Activated T-helper 1 cell treated with anti-CD3 and anti-CD28 coated beads, Interleukin-12 subunit alpha, Interleukin-12 subunit beta, Interleukin-2, Interleukin-4 antibody, amounts not matched to agents 30 ng/mL and 10 ng/mL and 1 ng/mL, durations not matched to agents 14 hours and 24 hours and 36 hours (primary cell): ENCODE measurements at regions of chr20 and their contacts with region 1.

Region 1: DNA sequence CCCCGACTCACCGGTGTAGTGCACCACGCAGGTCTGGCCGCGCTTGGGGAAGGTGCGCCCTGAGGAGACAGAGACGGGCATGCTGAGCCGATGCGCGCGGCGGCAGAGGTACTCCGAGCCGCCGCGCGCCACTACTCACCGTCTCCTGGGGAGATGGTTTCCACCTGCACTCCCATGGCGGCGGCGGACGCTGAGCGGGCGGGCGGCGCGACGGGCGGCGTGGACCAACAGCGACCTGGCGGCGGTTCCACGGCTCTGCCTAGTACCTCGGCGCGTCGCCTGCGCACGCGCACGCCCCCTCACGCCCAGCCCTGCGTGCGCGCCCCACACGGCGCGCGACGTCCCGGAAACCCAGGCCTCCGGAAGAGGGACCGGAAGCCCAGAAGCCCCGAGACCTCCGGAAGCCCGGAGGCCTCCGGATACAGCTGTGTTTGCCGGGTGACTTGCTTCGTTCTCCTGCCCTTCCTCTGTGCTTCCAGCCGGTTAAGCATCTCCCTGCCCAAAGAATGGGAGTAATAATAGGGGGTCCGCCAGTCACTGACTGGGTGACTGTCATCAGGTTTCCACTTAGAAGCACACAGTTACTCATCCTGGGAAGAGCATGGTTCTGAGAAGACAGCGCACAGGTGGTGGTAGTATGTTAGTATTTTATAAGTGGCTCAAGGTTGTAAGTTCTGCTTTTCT is at the start of gene FKBP1A:
- DNase-seq: peak; percentile 89
- H3K4me3 Mint-ChIP-seq: peak within 1 kb of the TSS; percentile 94
- H3K27ac Mint-ChIP-seq: peak within 1 kb of the TSS; percentile 92
- H3K4me1 Mint-ChIP-seq: peaks cover 65% of the 10 kb centered on the region
- H3K27me3 Mint-ChIP-seq: peaks cover 18% of the 10 kb centered on the region
- total RNA-seq, gene FKBP1A: 295 and 297 TPM in 2 replicates

Region 2: DNA sequence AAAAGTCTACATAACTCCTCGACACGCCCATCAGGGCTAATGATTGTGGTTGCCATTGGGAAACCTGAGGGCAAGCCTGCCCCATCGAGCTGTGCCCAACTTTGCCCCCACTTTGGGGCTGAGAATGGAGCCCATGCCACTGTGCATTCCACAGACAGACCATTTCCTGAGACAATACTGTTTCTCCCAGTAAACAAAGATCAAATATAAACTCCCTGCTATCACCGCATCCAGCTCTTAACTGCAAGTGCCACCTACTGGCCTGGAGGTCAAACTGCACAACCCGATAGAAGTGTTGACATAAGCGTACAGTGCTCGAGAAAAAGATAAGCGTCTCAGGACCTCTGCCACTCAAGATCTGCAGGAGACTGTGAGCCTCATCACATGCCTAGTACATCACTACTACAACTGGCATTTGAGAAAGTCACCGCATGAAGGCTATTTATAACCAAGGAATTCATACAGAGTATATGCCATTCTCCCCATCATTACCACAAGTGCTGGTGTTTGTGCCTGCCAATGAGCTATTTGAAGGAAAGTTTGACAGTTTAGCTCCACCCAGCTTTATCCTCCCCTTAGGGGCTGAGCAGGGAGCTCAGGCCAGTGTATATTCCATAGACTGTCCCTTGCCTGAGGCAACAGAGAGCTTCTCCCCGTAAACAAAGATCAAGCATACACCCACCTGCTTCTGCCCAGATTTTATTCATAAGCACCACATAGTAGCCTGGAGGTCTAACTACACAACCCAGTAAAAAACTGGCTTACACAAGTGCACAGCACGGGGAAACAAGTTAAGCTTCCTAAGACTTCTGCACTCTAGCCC is 1255.1 kb before region 1 on chr20:
- intact Hi-C with region 1: no loop called
- DNase-seq: no peak
- H3K4me3 Mint-ChIP-seq: no peak overlapping the region
- H3K27ac Mint-ChIP-seq: no peak overlapping the region
- H3K4me1 Mint-ChIP-seq: no peaks in the 10 kb centered on the region
- H3K27me3 Mint-ChIP-seq: peaks cover 24% of the 10 kb centered on the region

Region 3: GRCh38 chr20:431012-431904 is 961.7 kb before region 1 on chr20:
- intact Hi-C with region 1: no loop called
- DNase-seq: no peak
- H3K4me3 Mint-ChIP-seq: peak overlapping the region; percentile 57
- H3K27ac Mint-ChIP-seq: peak overlapping the region; percentile 90
- H3K4me1 Mint-ChIP-seq: peaks cover 72% of the 10 kb centered on the region
- H3K27me3 Mint-ChIP-seq: no peaks in the 10 kb centered on the region

Region 4: GRCh38 chr20:1212607-1213396 is 180.2 kb before region 1 on chr20:
- intact Hi-C with region 1: loop called (anchors 1 kb)
- DNase-seq: peak; percentile 59
- H3K4me3 Mint-ChIP-seq: no peak overlapping the region
- H3K27ac Mint-ChIP-seq: no peak overlapping the region
- H3K4me1 Mint-ChIP-seq: peaks cover 38% of the 10 kb centered on the region
- H3K27me3 Mint-ChIP-seq: peaks cover 11% of the 10 kb centered on the region

Region 5: DNA sequence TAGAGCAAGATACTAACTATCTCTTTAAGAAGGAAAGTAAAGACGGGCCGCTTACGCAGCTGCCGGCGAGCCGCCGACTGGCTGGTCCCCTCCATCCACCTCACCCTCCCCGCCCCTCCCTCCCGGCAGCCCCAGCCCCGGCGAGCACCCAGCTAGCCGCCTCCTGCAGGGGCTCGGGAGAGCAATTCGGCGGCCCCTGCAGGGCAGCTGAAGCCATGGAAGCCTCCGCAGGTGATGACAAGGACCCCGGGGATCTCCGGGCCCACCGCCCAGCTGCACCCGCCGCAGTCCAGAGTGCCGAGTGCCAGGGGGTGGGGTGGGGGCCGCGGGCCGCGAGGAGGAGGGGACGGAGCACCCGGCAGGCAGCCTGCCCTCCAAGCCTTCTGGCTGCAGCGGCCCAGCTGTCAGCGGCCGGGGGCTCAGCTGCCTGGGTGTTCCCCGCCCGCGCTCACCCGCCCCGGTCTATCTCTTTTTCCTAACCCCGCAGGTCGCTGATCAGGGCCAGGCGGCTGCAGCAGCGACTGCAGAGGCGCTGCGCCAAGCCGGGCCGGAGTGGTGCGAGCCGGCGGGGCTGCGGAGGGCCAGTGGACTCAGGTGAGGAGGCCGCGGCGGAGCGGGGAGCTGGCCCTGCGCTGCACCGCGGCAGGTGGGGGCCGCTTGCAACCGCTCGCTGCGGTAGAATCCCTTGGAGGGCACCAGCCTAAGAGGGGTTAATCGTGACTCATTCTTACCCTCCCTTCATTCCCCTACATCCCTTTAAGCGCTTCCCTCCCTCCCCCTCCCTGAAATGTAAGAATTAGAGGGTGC is 126.6 kb before region 1 on chr20 and contains the start of gene SNPH:
- intact Hi-C with region 1: loop called (anchors 1 kb)
- DNase-seq: peak; percentile 63
- H3K4me3 Mint-ChIP-seq: peak within 1 kb of the TSS; percentile 89
- H3K27ac Mint-ChIP-seq: peak within 1 kb of the TSS; percentile 87
- H3K4me1 Mint-ChIP-seq: peaks cover 32% of the 10 kb centered on the region
- H3K27me3 Mint-ChIP-seq: peaks cover 3% of the 10 kb centered on the region
- total RNA-seq, gene SNPH: 2.1 and 2.5 TPM in 2 replicates

Region 6: GRCh38 chr20:1325173-1326030 is 67.6 kb before region 1 on chr20:
- intact Hi-C with region 1: loop called (anchors 1 kb)
- DNase-seq: peak; percentile 98
- H3K4me3 Mint-ChIP-seq: no peak overlapping the region
- H3K27ac Mint-ChIP-seq: no peak overlapping the region
- H3K4me1 Mint-ChIP-seq: peaks cover 14% of the 10 kb centered on the region
- H3K27me3 Mint-ChIP-seq: peaks cover 6% of the 10 kb centered on the region

Region 7: GRCh38 chr20:1363522-1363921 is 29.4 kb before region 1 on chr20:
- intact Hi-C with region 1: loop called (anchors 1 kb)
- DNase-seq: no peak
- H3K4me3 Mint-ChIP-seq: peak overlapping the region; percentile 59
- H3K27ac Mint-ChIP-seq: peak overlapping the region; percentile 88
- H3K4me1 Mint-ChIP-seq: peaks cover 82% of the 10 kb centered on the region
- H3K27me3 Mint-ChIP-seq: no peaks in the 10 kb centered on the region

Region 8: GRCh38 chr20:1414982-1415381 is 22.0 kb after region 1 on chr20:
- intact Hi-C with region 1: no loop called
- DNase-seq: no peak
- H3K4me3 Mint-ChIP-seq: no peak overlapping the region
- H3K27ac Mint-ChIP-seq: no peak overlapping the region
- H3K4me1 Mint-ChIP-seq: peaks cover 8% of the 10 kb centered on the region
- H3K27me3 Mint-ChIP-seq: peaks cover 29% of the 10 kb centered on the region

Region 9: DNA sequence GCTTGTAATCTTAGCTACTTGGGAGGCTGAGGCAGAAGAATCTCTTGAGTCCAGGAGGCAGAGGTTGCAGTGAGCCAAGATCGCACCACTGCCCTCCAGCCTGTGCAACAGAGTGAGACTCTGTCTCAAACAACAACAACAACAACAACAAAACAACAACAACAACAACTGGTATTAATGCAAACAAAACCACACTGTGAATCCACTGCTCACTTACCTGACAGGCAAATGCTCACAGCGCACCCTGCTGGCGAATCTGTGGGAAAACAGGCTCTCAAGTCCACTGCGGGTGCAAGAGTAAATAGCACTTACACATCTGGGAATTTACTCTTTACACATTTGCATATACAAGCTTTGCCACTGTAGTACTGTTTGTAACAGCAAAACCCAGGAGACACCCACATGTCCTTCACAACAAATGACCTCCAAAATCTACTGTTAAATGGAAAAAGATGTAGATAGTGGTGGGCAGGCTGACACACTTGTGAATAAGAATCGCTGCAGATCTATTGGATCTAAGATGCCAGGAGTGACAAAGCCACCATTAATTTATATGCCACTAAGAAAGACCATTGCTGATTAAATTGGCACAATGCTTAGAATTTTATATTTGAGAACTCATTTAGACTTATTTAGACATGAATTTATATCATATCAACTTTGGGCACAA is 44.4 kb after region 1 on chr20:
- intact Hi-C with region 1: loop called (anchors 1 kb)
- DNase-seq: peak; percentile 66
- H3K4me3 Mint-ChIP-seq: no peak overlapping the region
- H3K27ac Mint-ChIP-seq: no peak overlapping the region
- H3K4me1 Mint-ChIP-seq: peaks cover 35% of the 10 kb centered on the region
- H3K27me3 Mint-ChIP-seq: peaks cover 17% of the 10 kb centered on the region

Region 10: DNA sequence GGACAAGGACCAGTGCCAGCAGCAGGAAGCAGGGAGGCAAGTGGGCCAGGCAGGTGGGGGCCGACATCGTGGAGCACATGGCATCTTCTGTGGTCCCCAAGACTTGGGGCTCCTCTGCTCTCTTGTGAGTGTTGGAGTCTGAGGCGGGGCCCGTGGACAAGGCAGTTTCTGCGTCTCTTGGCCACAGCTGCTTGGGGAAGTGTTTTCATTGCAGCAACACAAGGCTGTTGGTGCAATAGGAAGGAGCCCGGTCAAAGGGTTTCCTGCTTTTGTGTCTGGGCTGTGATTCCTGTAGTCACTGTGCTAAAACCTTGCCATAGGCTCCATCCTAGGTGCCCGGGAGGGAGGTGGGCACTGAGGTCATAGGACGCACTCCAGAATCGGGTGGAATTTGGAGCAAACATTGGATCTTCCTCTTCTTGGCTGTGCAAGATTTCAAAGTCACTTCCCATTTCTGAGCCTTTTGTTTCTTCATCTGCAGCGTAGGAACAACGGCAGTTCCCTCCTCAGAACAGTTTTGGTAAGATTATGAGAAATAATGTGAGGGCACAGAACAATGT is 98.4 kb after region 1 on chr20 and contains the start of gene SIRPB2:
- intact Hi-C with region 1: no loop called
- DNase-seq: no peak
- H3K4me3 Mint-ChIP-seq: no peak within 1 kb of the TSS
- H3K27ac Mint-ChIP-seq: no peak within 1 kb of the TSS
- H3K4me1 Mint-ChIP-seq: peaks cover 18% of the 10 kb centered on the region
- H3K27me3 Mint-ChIP-seq: peaks cover 37% of the 10 kb centered on the region
- total RNA-seq, gene SIRPB2: not detected in 2 replicates